Left cardiac atrium (tissue), 4 donors: ENCODE measurements at regions of chr4 and their contacts with region 1.

Region 1: DNA sequence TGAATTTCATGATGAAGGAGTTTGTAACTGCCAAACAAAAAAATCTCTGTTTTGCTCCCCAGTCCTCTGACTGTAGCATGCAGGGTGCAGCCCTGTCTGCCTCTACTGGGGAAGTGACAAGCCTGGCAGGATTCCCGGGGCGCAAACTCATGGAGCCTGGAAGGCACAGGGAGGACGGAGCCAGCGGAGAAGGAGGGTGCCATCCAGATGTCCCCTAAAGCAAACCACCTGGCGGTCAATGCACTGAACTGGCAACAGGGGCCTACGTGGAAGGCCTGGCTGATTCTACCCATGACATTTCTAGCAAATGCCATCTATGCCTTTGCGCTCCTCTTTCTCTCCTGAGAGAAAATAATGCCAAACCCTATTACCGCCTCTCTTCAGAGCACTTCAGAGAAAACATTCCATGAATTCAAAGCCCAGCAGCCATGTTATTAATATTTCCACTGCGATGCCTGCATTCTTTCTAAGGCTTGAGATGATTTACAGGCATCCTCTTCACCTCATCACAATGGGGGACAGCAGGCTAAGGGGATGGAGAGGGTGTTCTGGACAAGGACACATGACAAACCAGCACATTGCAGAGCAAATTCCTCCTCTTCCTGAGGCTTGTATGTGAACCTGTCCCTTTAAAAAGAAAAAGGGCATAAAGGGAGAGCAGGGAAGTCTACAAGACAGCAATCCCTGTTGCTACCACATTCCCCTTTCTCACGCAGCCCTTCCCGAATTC is 329.3 kb upstream of the NOCT start:
- DNase-seq: peak; percentile 67
- ATAC-seq: peak; percentile 42 to 64

Region 2: GRCh38 chr4:138864961-138865720 is 178.9 kb after region 1 on chr4:
- intact Hi-C with region 1: loop called in 1 of 2 experiments (anchors 5 kb)
- DNase-seq: peak; percentile 21
- ATAC-seq: no peak

Region 3: GRCh38 chr4:138919094-138919936 is 233.0 kb after region 1 on chr4:
- intact Hi-C with region 1: loop called in 1 of 2 experiments (anchors 5 kb)
- DNase-seq: peak; percentile 76
- ATAC-seq: peak; percentile 77 to 97